Endothelial cell of umbilical vein (primary cell): ENCODE measurements at regions of chr2 and their contacts with region 1.

Region 1: DNA sequence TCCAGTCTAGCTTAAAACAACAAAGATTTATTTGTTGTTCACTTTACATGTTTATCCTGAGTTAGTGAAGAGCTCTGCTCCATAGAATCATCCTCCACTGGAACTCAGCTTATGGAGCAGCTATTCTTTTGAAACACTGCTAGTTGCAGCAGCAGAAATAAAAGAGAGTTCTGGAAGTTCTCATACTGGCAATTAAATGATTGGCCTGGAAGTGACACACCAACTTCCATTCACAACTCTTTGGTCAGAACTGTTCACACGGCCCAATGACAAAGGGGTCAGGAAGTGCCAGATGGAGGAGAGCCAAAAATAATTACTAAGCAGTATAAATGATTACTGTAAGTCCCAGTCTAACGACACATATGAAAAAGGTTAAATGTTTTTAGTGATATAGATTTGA is 39.1 kb downstream of the FBXO11 start:
- DNase-seq: peak; percentile 97
- H3K4me3 ChIP-seq: peak overlapping the region in 1 of 3 experiments; percentile 27
- H3K27ac ChIP-seq: peak overlapping the region; percentile 85
- H3K4me1 ChIP-seq: peaks cover 32% of the 10 kb centered on the region
- H3K27me3 ChIP-seq: no peaks in the 10 kb centered on the region
- CTCF ChIP-seq: no peak
- POLR2A ChIP-seq: peak; percentile 34

Region 2: DNA sequence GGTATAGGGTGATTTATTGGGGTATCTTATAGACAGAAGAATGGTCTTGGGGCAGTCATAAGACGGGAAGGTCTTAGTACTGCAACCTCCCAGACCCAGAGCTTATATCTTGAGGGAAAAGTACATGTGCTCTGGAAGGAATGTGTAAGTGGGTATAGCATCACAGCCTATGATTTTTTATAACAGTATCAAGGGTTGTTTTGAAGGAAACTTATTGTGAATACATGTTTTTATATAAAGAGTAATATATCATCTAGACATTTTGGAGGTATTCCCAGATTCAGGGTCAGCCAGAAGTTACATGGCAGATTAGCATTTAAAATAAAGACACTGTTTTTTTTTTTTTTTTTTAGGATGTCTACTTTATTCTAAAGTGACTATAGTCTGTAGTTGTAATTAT is 615.1 kb after region 1 on chr2:
- CTCF ChIA-PET with region 1: no interaction called
- POLR2A ChIA-PET with region 1: no interaction called
- dilution Hi-C with region 1: no loop called
- intact Hi-C with region 1: loop called (anchors 5 kb)
- DNase-seq: peak; percentile 97
- H3K4me3 ChIP-seq: no peak overlapping the region
- H3K27ac ChIP-seq: peak overlapping the region; percentile 39
- H3K4me1 ChIP-seq: peaks cover 10% of the 10 kb centered on the region
- H3K27me3 ChIP-seq: no peaks in the 10 kb centered on the region
- CTCF ChIP-seq: no peak
- POLR2A ChIP-seq: no peak